ENCODE measurements at regions of chr6 and their contacts with region 1.

Region 1: GRCh38 chr6:43629505-43630300 is 639 bp upstream of the GTPBP2 start:
- DNase-seq: peak; percentile 64 to 90 (median 75)
- ATAC-seq: peak; percentile 79
- H3K4me3 ChIP-seq: peak overlapping the region; percentile 98
- H3K4me3 Mint-ChIP-seq: peak overlapping the region; percentile 97 to 100 (median 99)
- H3K27ac ChIP-seq: peak overlapping the region; percentile 76
- H3K27ac Mint-ChIP-seq: peak overlapping the region; percentile 90 to 99 (median 98)
- H3K4me1 ChIP-seq: peaks cover 9 to 11% of the 10 kb centered on the region in 2 donors
- H3K4me1 Mint-ChIP-seq: peaks cover 30 to 42% (median 38%) of the 10 kb centered on the region in 7 donors
- H3K27me3 ChIP-seq: no peaks in the 10 kb centered on the region
- H3K27me3 Mint-ChIP-seq: no peaks in the 10 kb centered on the region

Region 2: GRCh38 chr6:41936073-41936837 is 1693.4 kb before region 1 on chr6:
- CTCF ChIA-PET with region 1: no interaction called
- POLR2A ChIA-PET with region 1: no interaction called
- intact Hi-C with region 1: loop called in 1 of 2 experiments (anchors 10 kb)
- DNase-seq: peak in 8 of 9 donors; percentile 52 to 72 (median 63)
- ATAC-seq: peak; percentile 79
- H3K4me3 ChIP-seq: peak overlapping the region; percentile 34
- H3K4me3 Mint-ChIP-seq: peak overlapping the region; percentile 64 to 100 (median 90)
- H3K27ac ChIP-seq: peak overlapping the region; percentile 76
- H3K27ac Mint-ChIP-seq: peak overlapping the region; percentile 85 to 95 (median 90)
- H3K4me1 ChIP-seq: peaks cover 57 to 61% of the 10 kb centered on the region in 2 donors
- H3K4me1 Mint-ChIP-seq: peaks cover 48 to 81% (median 74%) of the 10 kb centered on the region in 7 donors
- H3K27me3 ChIP-seq: no peaks in the 10 kb centered on the region
- H3K27me3 Mint-ChIP-seq: no peaks in the 10 kb centered on the region

Region 3: DNA sequence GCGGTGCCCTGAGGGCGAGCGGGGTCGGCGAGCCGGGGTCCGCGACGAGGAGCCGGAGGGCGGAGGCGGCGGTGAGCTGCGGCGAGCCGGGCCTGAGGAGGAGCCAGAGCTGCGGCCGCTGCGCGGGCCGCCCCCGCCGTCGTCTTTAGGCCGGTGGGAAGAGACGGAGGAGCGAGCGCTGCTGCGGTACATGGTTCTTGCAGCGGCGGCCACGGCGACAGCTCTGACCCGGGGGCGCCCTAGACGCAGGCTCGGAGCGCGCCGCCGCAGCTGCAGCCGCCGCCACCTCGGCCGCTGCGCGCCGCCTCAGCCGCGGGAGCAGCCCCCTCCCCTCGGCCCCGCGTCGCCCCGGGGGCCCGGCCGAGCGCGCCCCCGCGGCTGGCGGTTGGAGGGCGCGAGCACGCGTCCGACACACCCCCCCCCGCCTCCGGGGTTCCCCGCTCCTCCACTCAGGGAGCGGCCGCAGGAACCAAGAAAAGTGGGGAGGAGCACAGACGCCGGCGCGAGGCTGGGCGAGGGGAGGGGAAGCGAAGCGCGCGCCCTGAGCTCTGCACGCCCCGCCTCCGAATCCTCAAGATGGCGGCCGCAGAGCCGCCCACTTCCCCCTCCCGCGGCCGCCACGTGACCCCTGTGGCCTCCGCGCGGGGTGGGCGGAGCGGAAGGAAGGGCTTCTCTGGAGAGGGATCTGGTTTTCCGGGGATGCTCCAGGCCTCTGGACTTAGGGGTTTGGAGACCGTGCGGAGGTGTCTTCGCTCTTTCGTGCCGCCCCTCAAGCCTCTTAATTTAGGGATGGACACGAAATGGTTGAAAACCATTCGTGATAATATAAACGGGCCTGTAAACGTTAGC is 260.3 kb before region 1 on chr6 and contains the start of gene ZNF318:
- CTCF ChIA-PET with region 1: no interaction called
- POLR2A ChIA-PET with region 1: interaction called, 6 read pairs
- intact Hi-C with region 1: loop called in 1 of 2 experiments (anchors 1 kb)
- DNase-seq: peak; percentile 85 to 95 (median 93)
- ATAC-seq: peak; percentile 97
- H3K4me3 ChIP-seq: peak within 1 kb of the TSS; percentile 90
- H3K4me3 Mint-ChIP-seq: peak within 1 kb of the TSS; percentile 75 to 97 (median 92)
- H3K27ac ChIP-seq: peak within 1 kb of the TSS; percentile 87
- H3K27ac Mint-ChIP-seq: peak within 1 kb of the TSS; percentile 91 to 98 (median 95)
- H3K4me1 ChIP-seq: peaks cover 20 to 23% of the 10 kb centered on the region in 2 donors
- H3K4me1 Mint-ChIP-seq: peaks cover 28 to 56% (median 50%) of the 10 kb centered on the region in 7 donors
- H3K27me3 ChIP-seq: no peaks in the 10 kb centered on the region
- H3K27me3 Mint-ChIP-seq: peaks cover 0 to 17% (median 0%) of the 10 kb centered on the region in 5 donors
- total RNA-seq, gene ZNF318: 15.8 to 40.2 (median 28.3) TPM

Region 4: DNA sequence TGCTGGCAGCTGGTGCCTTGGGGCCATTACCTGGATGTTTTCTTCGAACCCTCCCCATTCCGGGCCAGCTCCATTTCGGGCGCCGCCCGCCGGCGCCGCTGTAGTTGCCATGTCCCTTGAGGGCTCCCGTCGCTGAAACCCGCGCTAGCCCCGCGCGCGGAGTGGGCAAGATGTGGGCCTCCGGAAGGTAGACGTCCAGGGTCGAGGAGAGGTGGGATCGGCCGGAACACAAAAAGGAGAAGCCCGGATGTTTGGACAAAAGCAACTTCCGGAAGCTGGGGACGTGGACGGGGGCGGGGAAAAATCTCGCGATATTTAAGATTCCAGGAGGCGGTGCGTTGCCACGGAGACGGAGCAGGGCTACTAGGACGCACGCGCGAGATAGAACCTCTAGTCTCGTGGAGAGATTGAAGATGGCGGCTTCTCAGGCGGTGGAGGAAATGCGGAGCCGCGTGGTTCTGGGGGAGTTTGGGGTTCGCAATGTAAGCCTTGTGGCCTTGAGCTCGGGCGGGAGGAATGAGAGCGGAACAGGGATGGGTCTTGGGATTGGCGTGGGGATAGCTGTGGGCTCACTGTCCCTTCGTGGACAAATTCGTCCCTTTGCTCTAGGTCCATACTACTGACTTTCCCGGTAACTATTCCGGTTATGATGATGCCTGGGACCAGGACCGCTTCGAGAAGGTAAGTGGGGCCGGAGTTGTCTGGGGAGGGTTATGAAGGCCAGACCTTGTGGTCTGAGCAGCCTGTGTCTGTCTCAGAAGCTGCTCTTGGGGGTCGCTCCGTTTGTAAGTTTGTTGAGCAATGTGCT is 112.8 kb before region 1 on chr6 and contains the starts of genes POLR1C and YIPF3:
- CTCF ChIA-PET with region 1: no interaction called
- POLR2A ChIA-PET with region 1: interaction called, 7 read pairs
- intact Hi-C with region 1: loop called (anchors 1 kb)
- DNase-seq: peak; percentile 83 to 97 (median 96)
- ATAC-seq: peak; percentile 95
- H3K4me3 ChIP-seq: peak within 1 kb of the TSS; percentile 100
- H3K4me3 Mint-ChIP-seq: no peak within 1 kb of the TSS
- H3K27ac ChIP-seq: peak within 1 kb of the TSS; percentile 96
- H3K27ac Mint-ChIP-seq: no peak within 1 kb of the TSS
- H3K4me1 ChIP-seq: peaks cover 32 to 36% of the 10 kb centered on the region in 2 donors
- H3K4me1 Mint-ChIP-seq: peaks cover 8 to 36% (median 31%) of the 10 kb centered on the region in 7 donors
- H3K27me3 ChIP-seq: no peaks in the 10 kb centered on the region
- H3K27me3 Mint-ChIP-seq: no peaks in the 10 kb centered on the region
- total RNA-seq, gene POLR1C: 36.3 to 61.1 (median 40.9) TPM
- total RNA-seq, gene YIPF3: 54.4 to 75.9 (median 67.3) TPM

Region 5: DNA sequence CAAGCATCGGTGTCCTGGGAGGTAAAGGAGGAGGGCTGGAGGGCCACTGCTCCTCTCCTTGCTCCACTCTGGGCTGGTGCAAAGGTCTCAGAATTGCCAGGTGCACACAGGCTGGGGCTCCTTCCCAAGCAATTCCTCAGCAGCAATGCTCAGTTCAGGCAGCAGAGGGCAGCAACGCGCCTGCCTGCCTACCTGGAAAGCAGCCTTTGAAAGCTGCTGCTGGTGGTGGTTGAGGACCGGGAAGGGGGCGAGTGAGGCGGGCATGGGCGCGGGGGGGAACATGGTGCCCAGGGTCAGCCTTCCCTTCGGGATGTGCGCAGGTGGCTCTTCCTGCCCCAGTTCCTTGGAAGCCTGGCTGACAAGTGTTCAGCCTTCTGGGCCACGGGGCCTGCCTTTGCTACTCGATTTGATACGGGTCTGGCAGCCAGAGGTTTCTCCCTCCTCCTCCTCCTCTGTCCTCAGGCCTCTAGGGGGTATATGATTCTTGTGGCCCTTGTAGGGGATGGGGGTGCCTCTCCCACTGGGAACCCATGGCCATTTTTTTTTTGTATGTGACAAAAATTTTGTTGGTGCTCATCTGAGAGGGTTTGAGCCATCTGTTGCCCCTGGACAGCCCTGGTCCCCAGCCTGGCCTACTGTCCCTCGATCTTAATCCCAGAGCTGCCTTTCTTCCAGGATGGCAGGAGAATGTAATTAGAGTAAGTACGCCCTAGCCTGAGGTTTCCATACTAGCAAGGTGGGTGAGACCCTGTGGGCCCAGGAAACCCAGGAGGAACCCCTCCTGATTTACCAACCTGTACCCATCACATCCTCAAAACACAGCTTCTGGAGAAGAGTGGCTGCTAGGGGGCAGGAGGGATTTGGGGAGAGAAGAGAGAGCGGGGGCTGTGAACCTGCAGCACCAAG is 37.8 kb after region 1 on chr6:
- CTCF ChIA-PET with region 1: interaction called, 4 read pairs
- POLR2A ChIA-PET with region 1: no interaction called
- intact Hi-C with region 1: loop called in 1 of 2 experiments (anchors 1 kb)
- DNase-seq: peak; percentile 63 to 85 (median 77)
- ATAC-seq: peak; percentile 87
- H3K4me3 ChIP-seq: no peak overlapping the region
- H3K4me3 Mint-ChIP-seq: peak overlapping the region in 9 of 10 donors; percentile 23 to 79 (median 64)
- H3K27ac ChIP-seq: peak overlapping the region; percentile 10
- H3K27ac Mint-ChIP-seq: peak overlapping the region in 7 of 9 donors; percentile 22 to 89 (median 68)
- H3K4me1 ChIP-seq: peaks cover 8 to 9% of the 10 kb centered on the region in 2 donors
- H3K4me1 Mint-ChIP-seq: peaks cover 14 to 45% (median 18%) of the 10 kb centered on the region in 7 donors
- H3K27me3 ChIP-seq: no peaks in the 10 kb centered on the region
- H3K27me3 Mint-ChIP-seq: no peaks in the 10 kb centered on the region

Region 6: GRCh38 chr6:44086931-44087574 is 457.4 kb after region 1 on chr6:
- CTCF ChIA-PET with region 1: no interaction called
- POLR2A ChIA-PET with region 1: no interaction called
- intact Hi-C with region 1: no loop called
- DNase-seq: no peak
- ATAC-seq: no peak
- H3K4me3 ChIP-seq: no peak overlapping the region
- H3K4me3 Mint-ChIP-seq: no peak overlapping the region
- H3K27ac ChIP-seq: no peak overlapping the region
- H3K27ac Mint-ChIP-seq: no peak overlapping the region
- H3K4me1 ChIP-seq: no peaks in the 10 kb centered on the region
- H3K4me1 Mint-ChIP-seq: peaks cover 0 to 3% (median 0%) of the 10 kb centered on the region in 7 donors
- H3K27me3 ChIP-seq: no peaks in the 10 kb centered on the region
- H3K27me3 Mint-ChIP-seq: no peaks in the 10 kb centered on the region

Region 7: GRCh38 chr6:44387346-44388133 is 757.8 kb after region 1 on chr6 and contains the start of gene CDC5L:
- CTCF ChIA-PET with region 1: no interaction called
- POLR2A ChIA-PET with region 1: no interaction called
- intact Hi-C with region 1: loop called in 1 of 2 experiments (anchors 5 kb)
- DNase-seq: peak; percentile 80 to 96 (median 93)
- ATAC-seq: peak; percentile 88
- H3K4me3 ChIP-seq: peak within 1 kb of the TSS; percentile 71
- H3K4me3 Mint-ChIP-seq: peak within 1 kb of the TSS; percentile 91 to 100 (median 96)
- H3K27ac ChIP-seq: peak within 1 kb of the TSS; percentile 85
- H3K27ac Mint-ChIP-seq: peak within 1 kb of the TSS; percentile 91 to 99 (median 96)
- H3K4me1 ChIP-seq: peaks cover 17 to 29% of the 10 kb centered on the region in 2 donors
- H3K4me1 Mint-ChIP-seq: peaks cover 24 to 49% (median 46%) of the 10 kb centered on the region in 7 donors
- H3K27me3 ChIP-seq: no peaks in the 10 kb centered on the region
- H3K27me3 Mint-ChIP-seq: peaks cover 0 to 28% (median 0%) of the 10 kb centered on the region in 5 donors
- total RNA-seq, gene CDC5L: 17.4 to 25.4 (median 22.4) TPM